OCI-LY7 (cell line): ENCODE measurements at regions of chr12 and their contacts with region 1.

Region 1: GRCh38 chr12:101939856-101940265 is 62.5 kb downstream of the DRAM1 start:
- DNase-seq: peak; percentile 83
- H3K4me3 ChIP-seq: no peak overlapping the region
- H3K27ac ChIP-seq: no peak overlapping the region
- H3K4me1 ChIP-seq: peaks cover 48% of the 10 kb centered on the region
- CTCF ChIP-seq: peak; percentile 99

Region 2: DNA sequence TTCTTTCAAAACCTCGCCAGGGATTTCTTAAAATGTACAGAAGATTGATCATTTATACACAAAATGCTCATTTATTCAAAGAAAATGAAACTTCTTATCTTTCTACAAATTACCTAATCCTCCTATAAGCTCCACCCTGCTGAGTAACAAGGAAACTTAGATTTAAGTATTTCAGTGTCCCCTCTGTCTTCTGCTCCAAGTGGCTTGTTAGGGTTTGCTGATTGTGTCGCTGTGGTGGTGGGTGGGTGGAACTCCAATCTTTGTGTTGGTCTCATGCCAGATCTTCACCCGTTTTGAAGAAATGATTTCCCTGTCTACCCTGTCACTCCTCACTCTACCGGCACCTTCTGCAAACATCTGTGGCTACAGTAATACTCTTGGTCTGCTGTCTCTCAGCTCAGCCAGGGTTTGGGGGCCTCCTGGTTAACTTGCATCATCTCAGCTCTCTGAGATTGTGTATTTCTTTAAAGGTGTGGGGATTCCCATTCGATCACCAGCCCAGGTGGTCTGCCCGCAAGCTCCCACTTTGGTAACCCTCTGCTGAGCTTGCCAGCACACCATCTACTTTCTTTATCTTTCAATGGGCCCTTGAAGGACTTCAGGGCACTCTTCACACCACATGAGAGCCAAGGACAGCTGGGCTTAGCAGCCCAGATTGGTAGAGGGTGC is 11.3 kb after region 1 on chr12:
- CTCF ChIA-PET with region 1: interaction called, 5 read pairs
- POLR2A ChIA-PET with region 1: interaction called, 21 read pairs
- intact Hi-C with region 1: no loop called
- DNase-seq: no peak
- H3K4me3 ChIP-seq: no peak overlapping the region
- H3K27ac ChIP-seq: no peak overlapping the region
- H3K4me1 ChIP-seq: peaks cover 8% of the 10 kb centered on the region
- CTCF ChIP-seq: no peak

Region 3: GRCh38 chr12:102010265-102010994 is 70.6 kb after region 1 on chr12:
- CTCF ChIA-PET with region 1: interaction called, 4 read pairs
- POLR2A ChIA-PET with region 1: interaction called, 4 read pairs
- intact Hi-C with region 1: loop called (anchors 5 kb)
- DNase-seq: peak; percentile 85
- H3K4me3 ChIP-seq: peak overlapping the region; percentile 39
- H3K27ac ChIP-seq: peak overlapping the region; percentile 66
- H3K4me1 ChIP-seq: peaks cover 19% of the 10 kb centered on the region
- CTCF ChIP-seq: no peak

Region 4: DNA sequence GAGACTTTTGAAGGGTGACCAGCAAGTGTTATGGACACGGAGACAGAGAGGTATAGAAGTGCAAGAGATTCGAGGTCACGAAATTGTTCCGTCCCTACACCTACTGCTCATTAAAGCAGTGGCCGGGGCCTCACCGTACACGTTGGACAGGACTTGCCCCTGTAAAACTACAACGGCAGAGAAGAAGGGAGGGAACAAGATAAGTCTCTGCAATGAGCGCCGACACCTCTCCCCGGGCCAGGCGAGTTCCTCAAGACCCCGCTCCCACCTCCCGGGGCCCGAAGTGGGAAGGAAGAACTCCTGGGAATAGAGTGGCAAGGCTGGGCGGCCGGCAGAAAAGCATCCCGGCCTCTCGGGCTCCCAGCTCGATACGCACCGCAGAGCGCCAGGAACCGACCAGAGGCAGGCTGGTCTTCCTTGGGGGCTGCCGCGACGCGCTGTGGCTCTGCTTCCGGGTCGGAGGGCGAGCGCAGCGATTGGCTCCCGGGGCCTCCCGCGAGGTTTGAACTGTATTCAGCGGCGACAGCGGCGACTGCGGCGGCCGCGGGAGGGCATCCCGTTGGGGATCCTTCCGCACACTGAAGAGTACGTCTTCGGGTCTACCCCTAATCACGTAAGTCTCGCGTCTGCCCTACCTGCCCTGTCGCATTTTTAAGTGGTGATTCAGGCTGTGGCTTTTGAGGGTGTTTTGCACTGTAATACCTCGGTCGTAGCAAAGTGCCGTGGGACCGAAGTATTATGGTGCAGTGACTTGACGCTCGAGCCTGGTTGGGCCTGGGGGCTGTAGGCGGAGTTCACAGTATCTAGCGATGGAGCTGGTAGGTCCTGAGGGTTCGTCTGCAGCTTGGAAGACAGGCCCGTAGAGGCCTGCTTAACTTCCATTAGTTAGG is 180.1 kb after region 1 on chr12 and contains the starts of genes NUP37 and PARPBP:
- CTCF ChIA-PET with region 1: interaction called, 3 read pairs
- POLR2A ChIA-PET with region 1: interaction called, 8 read pairs
- intact Hi-C with region 1: loop called (anchors 2 kb)
- DNase-seq: peak; percentile 93
- H3K4me3 ChIP-seq: peak within 1 kb of the TSS; percentile 98
- H3K27ac ChIP-seq: peak within 1 kb of the TSS; percentile 81
- H3K4me1 ChIP-seq: peaks cover 31% of the 10 kb centered on the region
- CTCF ChIP-seq: no peak
- total RNA-seq, gene NUP37: 32.9 and 40.6 TPM in 2 replicates
- total RNA-seq, gene PARPBP: 32.9 and 48.8 TPM in 2 replicates

Region 5: DNA sequence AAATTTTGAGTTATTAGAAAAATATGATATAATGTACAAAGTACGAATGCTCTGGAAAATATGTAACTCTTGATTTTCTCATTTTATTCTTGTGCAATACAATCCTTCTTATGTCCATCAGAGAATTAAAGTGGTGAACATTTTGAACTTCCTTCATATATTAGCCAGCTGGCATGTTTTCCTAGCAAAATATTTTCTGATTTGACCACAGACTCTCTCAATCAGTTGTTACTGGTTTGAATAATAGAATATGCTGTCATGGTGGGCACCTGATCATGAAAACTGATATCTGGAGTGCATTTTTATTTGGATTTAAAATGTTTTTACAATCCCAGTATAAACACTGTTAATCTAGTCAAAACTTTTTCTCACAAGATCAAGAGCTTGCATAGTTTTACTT is 204.4 kb after region 1 on chr12:
- CTCF ChIA-PET with region 1: no interaction called
- POLR2A ChIA-PET with region 1: no interaction called
- intact Hi-C with region 1: no loop called
- DNase-seq: no peak
- H3K4me3 ChIP-seq: no peak overlapping the region
- H3K27ac ChIP-seq: no peak overlapping the region
- H3K4me1 ChIP-seq: no peaks in the 10 kb centered on the region
- CTCF ChIP-seq: no peak

Region 6: GRCh38 chr12:102484428-102484958 is 544.6 kb after region 1 on chr12:
- CTCF ChIA-PET with region 1: no interaction called
- POLR2A ChIA-PET with region 1: interaction called, 3 read pairs
- intact Hi-C with region 1: loop called (anchors 1 kb)
- DNase-seq: peak; percentile 59
- H3K4me3 ChIP-seq: no peak overlapping the region
- H3K27ac ChIP-seq: no peak overlapping the region
- H3K4me1 ChIP-seq: peaks cover 12% of the 10 kb centered on the region
- CTCF ChIP-seq: peak; percentile 96

Region 7: GRCh38 chr12:103441437-103442181 is 1501.7 kb after region 1 on chr12:
- CTCF ChIA-PET with region 1: no interaction called
- POLR2A ChIA-PET with region 1: no interaction called
- intact Hi-C with region 1: loop called (anchors 10 kb)
- DNase-seq: peak; percentile 92
- H3K4me3 ChIP-seq: peak overlapping the region; percentile 51
- H3K27ac ChIP-seq: peak overlapping the region; percentile 87
- H3K4me1 ChIP-seq: peaks cover 31% of the 10 kb centered on the region
- CTCF ChIP-seq: no peak